K562 (cell line): ENCODE measurements at regions of chr6 and their contacts with region 1.

Region 1: GRCh38 chr6:36955671-36956445 is 1.3 kb downstream of the PI16 start:
- DNase-seq: no peak
- ATAC-seq: no peak
- H3K4me3 ChIP-seq: no peak overlapping the region
- H3K27ac ChIP-seq: no peak overlapping the region
- H3K4me1 ChIP-seq: peaks cover 21 to 32% of the 10 kb centered on the region in 2 experiments; a peak in 4 of 5 replicates
- H3K27me3 ChIP-seq: peaks cover 15 to 50% of the 10 kb centered on the region in 2 experiments; a peak in 4 of 5 replicates
- CTCF ChIP-seq: no peak
- EP300 ChIP-seq: no peak
- POLR2A ChIP-seq: no peak
- RAD21 ChIP-seq: no peak

Region 2: GRCh38 chr6:36765594-36766398 is 190.1 kb before region 1 on chr6:
- CTCF ChIA-PET with region 1: no interaction called
- POLR2A ChIA-PET with region 1: no interaction called
- in situ Hi-C with region 1: no loop called
- intact Hi-C with region 1: no loop called
- DNase-seq: peak; percentile 88 to 92 (median 91)
- ATAC-seq: peak; percentile 97
- H3K4me3 ChIP-seq: no peak overlapping the region
- H3K27ac ChIP-seq: no peak overlapping the region
- H3K4me1 ChIP-seq: peaks cover 15 to 19% of the 10 kb centered on the region in 2 experiments; a peak in 3 of 5 replicates
- H3K27me3 ChIP-seq: peaks cover 20 to 33% of the 10 kb centered on the region in 2 experiments; a peak in 4 of 5 replicates
- CTCF ChIP-seq: peak; percentile 97 to 99 (median 99)
- EP300 ChIP-seq: peak; percentile 16; the same call in 1 of the 2 replicates
- POLR2A ChIP-seq: no peak
- RAD21 ChIP-seq: peak; percentile 99 to 100

Region 3: GRCh38 chr6:36934868-36935267 is 21.0 kb before region 1 on chr6:
- CTCF ChIA-PET with region 1: no interaction called
- POLR2A ChIA-PET with region 1: interaction called, 10 read pairs
- in situ Hi-C with region 1: no loop called
- intact Hi-C with region 1: no loop called
- DNase-seq: no peak
- ATAC-seq: no peak
- H3K4me3 ChIP-seq: no peak overlapping the region
- H3K27ac ChIP-seq: no peak overlapping the region
- H3K4me1 ChIP-seq: no peaks in the 10 kb centered on the region; a peak in 1 of 5 replicates
- H3K27me3 ChIP-seq: peaks cover 15 to 40% of the 10 kb centered on the region in 2 experiments
- CTCF ChIP-seq: no peak
- EP300 ChIP-seq: no peak
- POLR2A ChIP-seq: no peak
- RAD21 ChIP-seq: no peak

Region 4: DNA sequence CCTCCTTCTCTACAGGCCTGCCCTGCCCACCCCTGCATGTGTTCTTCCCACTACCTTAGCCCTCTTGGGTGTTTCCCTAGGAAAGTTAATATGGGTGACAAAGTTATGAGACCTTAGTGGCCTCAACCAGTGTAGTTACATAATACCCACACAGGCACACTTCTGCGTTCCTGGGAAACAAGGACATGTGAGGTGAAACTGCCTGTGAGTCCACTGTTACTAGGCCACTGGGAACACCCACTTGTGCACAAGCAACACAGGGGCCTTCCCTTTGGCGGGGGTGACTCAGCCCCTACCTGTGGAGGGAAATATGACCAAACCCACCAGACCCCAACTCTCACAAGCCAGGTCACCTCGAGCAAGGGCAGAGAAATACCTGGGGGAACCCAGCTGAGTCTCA is 11.4 kb after region 1 on chr6:
- CTCF ChIA-PET with region 1: no interaction called
- POLR2A ChIA-PET with region 1: interaction called, 13 read pairs
- in situ Hi-C with region 1: no loop called
- intact Hi-C with region 1: no loop called
- DNase-seq: no peak
- ATAC-seq: no peak; the same call in 2 of the 3 replicates
- H3K4me3 ChIP-seq: no peak overlapping the region
- H3K27ac ChIP-seq: no peak overlapping the region
- H3K4me1 ChIP-seq: peaks cover 0 to 24% of the 10 kb centered on the region in 2 experiments; a peak in 2 of 5 replicates
- H3K27me3 ChIP-seq: peaks cover 0 to 4% of the 10 kb centered on the region in 2 experiments; a peak in 1 of 5 replicates
- CTCF ChIP-seq: no peak
- EP300 ChIP-seq: no peak
- POLR2A ChIP-seq: no peak; the same call in 1 of the 2 replicates
- RAD21 ChIP-seq: no peak